Breast epithelium (tissue), 4 donors: ENCODE measurements at regions of chr4 and their contacts with region 1.

Region 1: DNA sequence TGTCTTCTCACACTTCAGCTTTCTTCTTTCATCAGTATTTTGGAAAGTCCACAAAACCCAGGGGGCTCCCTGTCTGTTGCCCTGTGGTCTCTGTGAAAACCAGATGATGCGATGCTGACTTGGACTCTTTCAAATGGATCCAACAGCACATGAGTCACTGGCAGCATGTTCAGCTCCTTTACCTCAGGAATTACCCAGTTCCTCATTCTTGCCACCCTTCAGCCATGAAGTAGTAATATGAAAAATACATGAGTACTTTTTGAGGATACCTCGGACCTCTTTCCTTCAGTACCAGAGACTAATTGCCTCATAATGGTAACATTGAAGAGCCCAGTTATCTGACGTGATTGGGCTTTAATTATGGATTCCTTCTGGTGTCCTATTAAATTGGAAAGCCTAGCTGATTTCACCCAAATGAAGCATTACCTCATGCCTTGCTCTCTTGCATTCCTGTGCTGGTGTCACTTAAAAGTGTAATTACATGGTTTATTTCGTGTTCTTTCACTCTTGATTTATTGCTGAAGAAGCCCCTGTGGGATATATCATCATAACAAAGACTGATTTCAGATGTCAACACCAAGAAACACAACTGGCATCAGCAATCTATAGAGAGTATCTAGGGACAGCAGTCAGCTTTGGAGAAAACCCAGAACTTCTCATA is 63.4 kb downstream of the NFKB1 start:
- DNase-seq: no peak
- H3K4me3 ChIP-seq: no peak overlapping the region
- H3K27ac ChIP-seq: no peak overlapping the region
- H3K4me1 ChIP-seq: no peaks in the 10 kb centered on the region
- H3K27me3 ChIP-seq: no peaks in the 10 kb centered on the region
- CTCF ChIP-seq: no peak
- POLR2A ChIP-seq: no peak

Region 2: GRCh38 chr4:102518703-102519131 is 45.8 kb before region 1 on chr4:
- intact Hi-C with region 1: no loop called
- DNase-seq: no peak
- H3K4me3 ChIP-seq: no peak overlapping the region
- H3K27ac ChIP-seq: no peak overlapping the region
- H3K4me1 ChIP-seq: no peaks in the 10 kb centered on the region
- H3K27me3 ChIP-seq: no peaks in the 10 kb centered on the region
- CTCF ChIP-seq: no peak
- POLR2A ChIP-seq: no peak

Region 3: DNA sequence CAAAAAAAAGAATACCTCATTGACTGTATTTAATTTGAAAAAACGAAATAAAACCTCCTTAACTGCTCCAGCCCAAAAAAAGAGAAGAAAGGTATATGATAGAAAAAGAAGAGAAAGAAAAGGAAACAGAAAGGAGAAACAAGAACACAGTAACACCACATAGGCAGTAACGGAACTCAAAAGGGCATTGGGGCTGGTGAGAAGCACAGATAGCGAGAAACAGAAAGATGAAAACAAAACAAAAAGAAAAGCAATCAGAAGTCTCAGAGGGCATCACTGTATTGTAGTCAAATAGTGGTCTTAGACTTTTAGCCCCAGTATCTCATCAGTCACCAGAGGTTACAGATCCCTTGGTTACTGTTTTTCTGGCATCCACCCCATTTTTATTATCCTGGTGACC is 25.2 kb after region 1 on chr4:
- intact Hi-C with region 1: loop called (anchors 1 kb)
- DNase-seq: no peak
- H3K4me3 ChIP-seq: no peak overlapping the region
- H3K27ac ChIP-seq: no peak overlapping the region
- H3K4me1 ChIP-seq: no peaks in the 10 kb centered on the region
- H3K27me3 ChIP-seq: no peaks in the 10 kb centered on the region
- CTCF ChIP-seq: no peak
- POLR2A ChIP-seq: no peak